ENCODE measurements at regions of chr3 and their contacts with region 1.

Region 1: DNA sequence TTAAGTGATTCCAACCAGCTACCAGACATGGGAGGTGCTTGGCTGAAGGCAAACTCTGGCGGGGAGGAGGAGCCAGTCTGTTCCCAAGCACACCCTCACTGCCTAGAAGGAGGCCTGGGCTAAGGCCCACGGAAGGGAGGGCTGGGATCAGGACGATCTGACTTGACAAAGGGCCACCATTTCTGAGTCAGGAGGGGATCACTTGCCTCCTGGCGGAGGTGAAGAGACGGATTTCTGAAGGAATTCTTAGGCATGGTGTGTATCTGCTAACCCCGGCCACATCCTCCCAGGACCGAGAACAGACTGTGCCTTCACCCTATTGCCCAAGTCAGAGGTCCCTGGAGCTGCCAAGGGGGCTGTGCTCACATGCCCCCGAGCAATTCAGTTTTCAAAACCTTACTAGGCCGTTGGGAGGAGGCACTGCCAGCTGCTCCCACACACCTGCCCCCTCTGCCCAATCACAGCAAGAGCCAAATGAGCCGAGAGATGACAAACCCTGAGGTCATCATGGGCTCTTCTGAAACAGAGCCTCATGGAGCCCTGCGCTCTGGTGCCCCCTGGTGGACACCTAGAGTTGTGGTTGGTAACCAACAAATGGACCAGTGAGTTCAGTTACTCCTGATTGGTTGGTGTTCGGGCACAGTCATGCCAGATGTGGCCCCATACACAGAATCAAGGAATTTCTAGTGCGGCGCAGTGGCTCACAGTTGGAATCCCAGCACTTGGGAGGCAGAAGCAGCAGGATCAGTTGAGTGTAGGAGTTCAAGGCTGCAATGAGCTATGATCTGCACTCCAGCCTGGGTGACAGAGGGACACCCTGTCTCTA is 6.5 kb upstream of the TNK2 start:
- DNase-seq: peak; percentile 92 to 96 (median 95)
- ATAC-seq: peak; percentile 90 to 93
- H3K4me3 ChIP-seq: no peak overlapping the region
- H3K27ac ChIP-seq: peak overlapping the region; percentile 60
- H3K4me1 ChIP-seq: no peaks in the 10 kb centered on the region
- H3K27me3 ChIP-seq: no peaks in the 10 kb centered on the region

Region 2: GRCh38 chr3:195863121-195864006 is 51.5 kb before region 1 on chr3:
- intact Hi-C with region 1: loop called in 3 of 4 experiments (anchors 2 to 5 kb)
- DNase-seq: peak; percentile 92 to 97 (median 96)
- ATAC-seq: peak; percentile 95
- H3K4me3 ChIP-seq: no peak overlapping the region
- H3K27ac ChIP-seq: peak overlapping the region; percentile 6
- H3K4me1 ChIP-seq: no peaks in the 10 kb centered on the region
- H3K27me3 ChIP-seq: no peaks in the 10 kb centered on the region

Region 3: DNA sequence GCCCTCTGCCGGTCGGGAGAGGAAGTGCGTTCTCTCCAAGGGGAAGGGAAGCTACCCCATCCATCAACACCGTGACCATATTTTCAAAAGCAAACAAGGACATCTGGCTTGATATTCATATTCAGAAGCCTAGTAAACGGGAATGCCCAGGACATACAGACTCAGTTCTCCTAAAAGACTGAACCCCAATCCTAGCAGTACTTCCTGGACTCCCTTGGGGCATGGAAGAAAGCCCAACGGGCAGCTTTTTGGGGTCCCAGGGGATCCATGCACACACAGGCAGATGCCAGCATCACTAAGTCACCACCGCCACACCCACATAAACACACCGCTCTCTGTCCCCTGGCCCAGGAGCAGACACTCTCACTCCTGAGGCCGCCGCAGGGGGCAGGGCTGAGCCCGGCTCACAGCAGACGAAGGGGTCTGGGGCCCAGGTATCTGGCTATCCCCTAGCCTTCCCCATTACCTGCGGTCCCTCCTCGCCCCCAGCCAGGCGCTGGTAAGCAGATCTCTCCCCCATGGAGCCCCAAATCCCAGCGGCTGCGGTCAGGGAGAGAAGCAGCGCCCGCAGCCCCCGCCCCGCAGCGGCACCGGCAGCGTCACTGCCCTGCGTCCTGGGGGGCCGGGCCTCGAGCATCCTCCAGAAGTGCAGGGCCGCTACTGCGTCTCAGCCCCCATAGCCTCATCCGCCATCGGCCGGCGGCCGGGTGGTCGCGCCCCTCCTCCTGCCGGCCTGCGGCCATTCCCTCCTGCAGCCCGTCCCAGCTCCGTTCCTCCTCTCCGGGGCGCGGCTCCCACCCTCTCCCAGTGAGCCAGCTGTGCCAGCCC is 19.9 kb before region 1 on chr3:
- intact Hi-C with region 1: loop called in 1 of 4 experiments (anchors 2 kb)
- DNase-seq: peak; percentile 45 to 83 (median 79)
- ATAC-seq: peak; percentile 9 to 40
- H3K4me3 ChIP-seq: peak overlapping the region; percentile 65
- H3K27ac ChIP-seq: peak overlapping the region; percentile 68
- H3K4me1 ChIP-seq: peaks cover 15% of the 10 kb centered on the region
- H3K27me3 ChIP-seq: no peaks in the 10 kb centered on the region

Measured in right cardiac atrium (tissue), 5 donors.